Endothelial cell of umbilical vein (primary cell): ENCODE measurements at regions of chr1 and their contacts with region 1.

Region 1: GRCh38 chr1:78286686-78287085 is 204.1 kb upstream of the PTGFR start:
- DNase-seq: peak; percentile 81
- H3K4me3 ChIP-seq: no peak overlapping the region
- H3K27ac ChIP-seq: peak overlapping the region; percentile 79
- H3K4me1 ChIP-seq: peaks cover 12% of the 10 kb centered on the region
- H3K27me3 ChIP-seq: no peaks in the 10 kb centered on the region
- CTCF ChIP-seq: no peak
- POLR2A ChIP-seq: no peak

Region 2: GRCh38 chr1:78340006-78340405 is 53.3 kb after region 1 on chr1:
- CTCF ChIA-PET with region 1: no interaction called
- POLR2A ChIA-PET with region 1: no interaction called
- dilution Hi-C with region 1: no loop called
- intact Hi-C with region 1: loop called (anchors 2 kb)
- DNase-seq: peak; percentile 56
- H3K4me3 ChIP-seq: no peak overlapping the region
- H3K27ac ChIP-seq: peak overlapping the region; percentile 51
- H3K4me1 ChIP-seq: peaks cover 14% of the 10 kb centered on the region
- H3K27me3 ChIP-seq: no peaks in the 10 kb centered on the region
- CTCF ChIP-seq: no peak
- POLR2A ChIP-seq: no peak

Region 3: GRCh38 chr1:78377356-78377928 is 90.8 kb after region 1 on chr1:
- CTCF ChIA-PET with region 1: no interaction called
- POLR2A ChIA-PET with region 1: no interaction called
- dilution Hi-C with region 1: no loop called
- intact Hi-C with region 1: no loop called
- DNase-seq: no peak
- H3K4me3 ChIP-seq: no peak overlapping the region
- H3K27ac ChIP-seq: no peak overlapping the region
- H3K4me1 ChIP-seq: no peaks in the 10 kb centered on the region
- H3K27me3 ChIP-seq: peaks cover 4% of the 10 kb centered on the region in 2 experiments
- CTCF ChIP-seq: no peak
- POLR2A ChIP-seq: no peak